Naive thymus-derived CD4-positive, alpha-beta T cell (primary cell): ENCODE measurements at regions of chr2 and their contacts with region 1.

Region 1: DNA sequence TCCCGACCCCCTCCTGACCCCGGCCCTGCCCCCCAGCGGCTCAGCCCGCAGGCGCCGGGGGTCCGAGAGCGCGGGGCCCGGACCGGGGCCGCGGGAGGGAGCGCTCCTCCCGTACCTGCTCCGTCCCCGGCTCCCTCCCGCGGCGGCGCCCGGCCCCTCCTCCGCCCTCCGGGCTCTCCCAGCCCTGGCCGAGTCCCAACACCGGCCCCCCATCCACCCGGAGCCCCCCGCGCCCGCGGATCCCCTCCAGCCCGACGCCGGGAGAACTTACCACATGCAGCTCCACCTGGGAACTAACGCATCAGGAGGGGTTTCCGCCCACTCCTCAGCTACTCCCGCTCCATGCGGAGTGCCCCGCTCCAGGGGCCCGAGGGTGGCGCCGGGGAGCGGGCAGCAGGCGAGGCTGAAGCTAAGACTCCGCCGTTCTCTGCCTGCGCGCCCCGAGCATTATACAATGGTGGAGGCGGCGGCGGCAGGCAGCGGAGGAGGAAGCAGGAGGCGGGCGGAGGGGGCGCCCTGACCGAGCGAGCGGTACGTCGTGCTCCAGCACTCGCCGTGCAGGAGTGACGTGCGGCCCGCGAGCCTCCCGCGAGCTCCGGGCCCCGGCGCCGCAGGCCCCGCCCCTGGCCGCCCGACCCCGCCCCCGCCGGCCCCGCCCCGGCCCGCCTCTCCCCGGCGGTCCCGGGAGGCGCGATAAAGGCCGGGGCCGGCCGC is at the start of gene SERTAD2:
- DNase-seq: peak; percentile 80 to 89 (median 86)
- ATAC-seq: peak; percentile 93
- H3K4me3 ChIP-seq: peak within 1 kb of the TSS; percentile 66
- H3K4me3 Mint-ChIP-seq: peak within 1 kb of the TSS; percentile 84 to 99 (median 96)
- H3K27ac ChIP-seq: peak within 1 kb of the TSS; percentile 90
- H3K27ac Mint-ChIP-seq: peak within 1 kb of the TSS; percentile 81 to 98 (median 94)
- H3K4me1 ChIP-seq: peaks cover 8 to 45% of the 10 kb centered on the region in 2 donors
- H3K4me1 Mint-ChIP-seq: peaks cover 44 to 84% (median 80%) of the 10 kb centered on the region in 7 donors
- H3K27me3 ChIP-seq: no peaks in the 10 kb centered on the region
- H3K27me3 Mint-ChIP-seq: no peaks in the 10 kb centered on the region
- total RNA-seq, gene SERTAD2: 34.3 to 43.8 (median 40.1) TPM

Region 2: GRCh38 chr2:64203858-64204632 is 449.5 kb before region 1 on chr2:
- CTCF ChIA-PET with region 1: no interaction called
- POLR2A ChIA-PET with region 1: no interaction called
- intact Hi-C with region 1: loop called in 1 of 2 experiments (anchors 5 kb)
- DNase-seq: peak in 5 of 9 donors; percentile 12 to 67 (median 28)
- ATAC-seq: peak; percentile 81
- H3K4me3 ChIP-seq: peak overlapping the region; percentile 52
- H3K4me3 Mint-ChIP-seq: peak overlapping the region; percentile 72 to 89 (median 80)
- H3K27ac ChIP-seq: peak overlapping the region; percentile 66
- H3K27ac Mint-ChIP-seq: peak overlapping the region; percentile 82 to 95 (median 94)
- H3K4me1 ChIP-seq: peaks cover 0 to 51% of the 10 kb centered on the region in 2 donors
- H3K4me1 Mint-ChIP-seq: peaks cover 26 to 91% (median 81%) of the 10 kb centered on the region in 7 donors
- H3K27me3 ChIP-seq: no peaks in the 10 kb centered on the region
- H3K27me3 Mint-ChIP-seq: no peaks in the 10 kb centered on the region

Region 3: DNA sequence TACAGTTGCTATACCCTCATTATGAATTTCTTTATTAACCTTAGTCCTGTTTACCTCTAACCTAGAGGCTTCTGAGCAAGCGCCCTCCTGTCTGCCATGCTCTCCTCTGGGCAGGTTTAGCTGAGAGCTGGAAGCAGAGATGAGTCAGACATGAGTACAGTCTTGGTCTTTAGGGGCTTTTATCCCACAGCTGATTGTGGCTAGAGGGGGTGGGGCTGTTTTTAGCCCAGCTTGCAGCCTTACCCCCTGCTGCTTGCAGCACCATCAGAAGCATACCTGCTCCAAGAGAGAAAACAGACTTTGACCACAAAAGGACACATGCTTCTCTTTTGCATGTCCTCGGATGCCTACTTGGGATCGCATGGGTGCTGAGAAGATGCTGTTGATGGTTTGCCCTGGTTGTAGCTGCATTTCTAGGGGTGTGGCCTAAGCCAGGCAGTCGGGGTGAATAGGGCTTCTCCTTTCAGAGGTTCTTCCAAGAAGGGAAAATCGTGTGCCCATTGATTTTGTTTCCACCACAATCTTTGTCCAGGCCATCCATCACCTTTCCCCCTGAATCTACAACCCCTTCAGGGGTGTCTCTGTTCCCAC is 314.5 kb before region 1 on chr2:
- CTCF ChIA-PET with region 1: no interaction called
- POLR2A ChIA-PET with region 1: no interaction called
- intact Hi-C with region 1: no loop called
- DNase-seq: no peak
- ATAC-seq: no peak
- H3K4me3 ChIP-seq: no peak overlapping the region
- H3K4me3 Mint-ChIP-seq: no peak overlapping the region
- H3K27ac ChIP-seq: no peak overlapping the region
- H3K27ac Mint-ChIP-seq: peak overlapping the region in 1 of 9 donors; percentile 37
- H3K4me1 ChIP-seq: no peaks in the 10 kb centered on the region
- H3K4me1 Mint-ChIP-seq: peaks cover 0 to 7% (median 0%) of the 10 kb centered on the region in 7 donors
- H3K27me3 ChIP-seq: no peaks in the 10 kb centered on the region
- H3K27me3 Mint-ChIP-seq: peaks cover 0 to 10% (median 0%) of the 10 kb centered on the region in 5 donors

Region 4: DNA sequence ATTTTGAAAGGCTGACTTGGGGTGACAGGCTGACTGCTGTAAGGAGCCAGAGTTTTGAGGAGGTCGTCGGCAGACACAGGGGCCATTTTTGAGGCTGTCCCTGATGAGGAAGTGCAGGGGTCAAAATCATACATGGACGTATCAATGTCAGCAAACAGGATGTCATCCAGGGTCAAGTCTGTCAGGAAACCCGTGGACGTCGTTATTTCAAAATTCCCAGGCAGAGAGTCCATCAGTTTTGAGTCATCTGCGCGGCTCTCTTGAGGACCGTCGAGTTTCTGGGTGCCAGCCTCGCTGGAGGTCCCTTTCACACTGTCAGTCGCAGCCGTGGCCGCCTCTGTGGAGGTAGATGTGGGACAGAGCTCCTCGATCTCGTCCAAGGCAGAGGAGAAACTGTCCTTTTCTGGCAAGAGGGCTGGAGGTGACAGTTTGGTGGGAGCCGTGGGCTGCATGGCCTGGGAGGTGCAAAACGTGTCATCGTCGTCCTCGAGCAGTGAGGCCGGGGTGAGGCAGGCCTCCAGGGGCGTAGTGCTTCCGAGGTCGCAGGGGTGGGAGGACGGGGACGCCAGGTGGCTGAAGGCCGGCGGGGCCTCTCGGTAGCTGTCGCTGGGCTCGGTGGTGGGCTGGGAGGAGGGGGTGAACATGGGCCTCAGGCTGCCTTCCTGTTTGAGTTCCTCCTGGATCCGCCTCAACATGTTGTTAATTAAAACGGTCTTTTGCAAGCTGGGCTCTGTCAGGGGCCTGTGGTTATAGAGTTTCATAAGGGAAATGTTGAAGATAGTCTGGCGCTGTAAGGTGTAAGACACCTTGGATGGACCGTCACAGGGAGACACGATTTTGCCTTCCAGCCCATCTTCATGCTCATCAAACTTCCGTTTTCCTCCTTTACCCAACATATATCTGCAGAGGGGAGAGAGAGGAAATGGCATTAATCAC is 17.3 kb before region 1 on chr2:
- CTCF ChIA-PET with region 1: interaction called, 8 read pairs
- POLR2A ChIA-PET with region 1: interaction called, 31 read pairs
- intact Hi-C with region 1: no loop called
- DNase-seq: no peak
- ATAC-seq: peak; percentile 43
- H3K4me3 ChIP-seq: no peak overlapping the region
- H3K4me3 Mint-ChIP-seq: peak overlapping the region; percentile 47 to 75 (median 66)
- H3K27ac ChIP-seq: peak overlapping the region; percentile 36
- H3K27ac Mint-ChIP-seq: peak overlapping the region; percentile 33 to 92 (median 88)
- H3K4me1 ChIP-seq: peaks cover 0 to 41% of the 10 kb centered on the region in 2 donors
- H3K4me1 Mint-ChIP-seq: peaks cover 47 to 69% (median 59%) of the 10 kb centered on the region in 7 donors
- H3K27me3 ChIP-seq: no peaks in the 10 kb centered on the region
- H3K27me3 Mint-ChIP-seq: no peaks in the 10 kb centered on the region

Region 5: DNA sequence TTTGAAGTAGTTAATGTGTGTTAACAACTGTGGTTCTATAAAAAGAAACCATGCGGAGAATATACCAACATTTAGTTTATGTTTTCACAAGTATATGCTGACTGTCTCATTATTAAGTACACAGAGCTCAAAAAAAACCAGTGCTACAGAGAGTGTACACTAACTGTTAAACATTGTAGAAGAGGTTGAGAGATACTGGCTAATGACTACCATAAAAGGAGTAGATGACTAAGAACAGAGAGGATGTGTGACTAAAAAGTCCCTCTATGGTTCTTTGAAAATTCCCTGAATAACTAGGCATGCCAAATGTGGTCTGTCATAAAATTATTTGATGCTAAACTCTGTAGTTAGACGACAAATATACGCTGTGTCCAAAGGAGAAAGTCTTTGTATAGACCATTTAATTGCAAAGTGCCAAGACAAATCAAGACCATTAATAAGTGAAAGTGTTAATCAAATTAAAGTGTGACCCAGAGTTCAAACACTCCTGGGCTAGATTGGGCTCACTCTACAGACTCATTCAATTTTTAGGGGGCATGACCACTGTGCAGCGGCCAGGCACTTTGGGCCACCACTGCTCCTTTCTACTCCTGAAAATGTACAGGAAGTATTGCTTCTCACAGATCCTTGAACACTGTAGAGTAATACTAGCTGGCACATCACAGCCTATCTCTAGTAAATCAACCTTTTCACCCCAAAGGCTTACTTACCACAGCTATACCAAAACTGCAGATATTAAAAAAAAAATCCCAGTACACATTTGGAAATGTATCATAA is 45.4 kb after region 1 on chr2:
- CTCF ChIA-PET with region 1: interaction called, 5 read pairs
- POLR2A ChIA-PET with region 1: interaction called, 20 read pairs
- intact Hi-C with region 1: loop called in 1 of 2 experiments (anchors 1 kb)
- DNase-seq: no peak
- ATAC-seq: peak; percentile 76
- H3K4me3 ChIP-seq: no peak overlapping the region
- H3K4me3 Mint-ChIP-seq: peak overlapping the region in 1 of 10 donors; percentile 80
- H3K27ac ChIP-seq: no peak overlapping the region
- H3K27ac Mint-ChIP-seq: peak overlapping the region in 4 of 9 donors; percentile 2 to 79 (median 36)
- H3K4me1 ChIP-seq: peaks cover 8 to 12% of the 10 kb centered on the region in 2 donors
- H3K4me1 Mint-ChIP-seq: peaks cover 21 to 59% (median 41%) of the 10 kb centered on the region in 7 donors
- H3K27me3 ChIP-seq: no peaks in the 10 kb centered on the region
- H3K27me3 Mint-ChIP-seq: no peaks in the 10 kb centered on the region

Region 6: DNA sequence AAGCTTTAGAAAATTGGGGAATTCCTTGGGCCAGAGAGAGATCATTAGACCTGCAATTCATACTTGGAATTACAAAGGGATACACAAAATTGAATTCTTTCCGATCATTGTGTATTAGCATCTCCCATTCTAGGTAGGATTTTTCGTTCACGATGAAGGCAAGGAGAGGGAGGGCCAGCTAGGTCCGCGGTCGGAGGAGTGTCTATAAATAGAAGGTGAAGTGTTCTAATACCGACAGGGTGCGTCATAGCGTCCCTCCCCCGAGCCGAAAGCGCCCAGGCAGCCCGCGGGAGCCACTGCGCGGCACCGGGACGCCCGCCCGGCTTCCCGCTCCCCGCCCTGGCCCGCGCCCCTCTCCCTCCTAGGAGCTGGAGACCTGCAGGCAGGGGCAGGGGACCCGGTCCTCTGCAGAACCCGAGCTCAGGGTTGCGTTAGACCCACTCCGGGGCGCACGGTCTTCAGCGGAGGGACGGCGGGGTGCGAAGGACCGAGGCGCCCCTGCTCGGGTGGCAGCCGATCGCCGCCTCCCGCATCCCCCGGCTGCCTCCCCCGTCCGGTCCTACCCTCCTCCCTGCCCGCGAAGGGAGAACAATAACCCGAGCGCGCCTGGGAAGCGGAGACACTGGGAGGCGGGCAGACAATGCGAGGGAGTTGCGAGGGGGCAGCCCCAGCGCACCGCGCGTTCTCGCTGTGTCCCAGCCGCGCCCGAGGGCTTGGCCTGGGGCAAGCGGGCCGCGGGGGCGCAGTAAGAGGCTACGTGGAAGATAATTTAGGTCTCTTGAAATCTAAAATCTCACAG is 114.4 kb after region 1 on chr2:
- CTCF ChIA-PET with region 1: interaction called, 5 read pairs
- POLR2A ChIA-PET with region 1: interaction called, 28 read pairs
- intact Hi-C with region 1: loop called (anchors 1 to 2 kb)
- DNase-seq: peak; percentile 35 to 78 (median 55)
- ATAC-seq: peak; percentile 89
- H3K4me3 ChIP-seq: peak overlapping the region; percentile 80
- H3K4me3 Mint-ChIP-seq: peak overlapping the region; percentile 90 to 99 (median 96)
- H3K27ac ChIP-seq: peak overlapping the region; percentile 73
- H3K27ac Mint-ChIP-seq: peak overlapping the region; percentile 92 to 97 (median 95)
- H3K4me1 ChIP-seq: peaks cover 3 to 12% of the 10 kb centered on the region in 2 donors
- H3K4me1 Mint-ChIP-seq: peaks cover 9 to 40% (median 23%) of the 10 kb centered on the region in 7 donors
- H3K27me3 ChIP-seq: no peaks in the 10 kb centered on the region
- H3K27me3 Mint-ChIP-seq: peaks cover 0 to 15% (median 0%) of the 10 kb centered on the region in 5 donors

Region 7: DNA sequence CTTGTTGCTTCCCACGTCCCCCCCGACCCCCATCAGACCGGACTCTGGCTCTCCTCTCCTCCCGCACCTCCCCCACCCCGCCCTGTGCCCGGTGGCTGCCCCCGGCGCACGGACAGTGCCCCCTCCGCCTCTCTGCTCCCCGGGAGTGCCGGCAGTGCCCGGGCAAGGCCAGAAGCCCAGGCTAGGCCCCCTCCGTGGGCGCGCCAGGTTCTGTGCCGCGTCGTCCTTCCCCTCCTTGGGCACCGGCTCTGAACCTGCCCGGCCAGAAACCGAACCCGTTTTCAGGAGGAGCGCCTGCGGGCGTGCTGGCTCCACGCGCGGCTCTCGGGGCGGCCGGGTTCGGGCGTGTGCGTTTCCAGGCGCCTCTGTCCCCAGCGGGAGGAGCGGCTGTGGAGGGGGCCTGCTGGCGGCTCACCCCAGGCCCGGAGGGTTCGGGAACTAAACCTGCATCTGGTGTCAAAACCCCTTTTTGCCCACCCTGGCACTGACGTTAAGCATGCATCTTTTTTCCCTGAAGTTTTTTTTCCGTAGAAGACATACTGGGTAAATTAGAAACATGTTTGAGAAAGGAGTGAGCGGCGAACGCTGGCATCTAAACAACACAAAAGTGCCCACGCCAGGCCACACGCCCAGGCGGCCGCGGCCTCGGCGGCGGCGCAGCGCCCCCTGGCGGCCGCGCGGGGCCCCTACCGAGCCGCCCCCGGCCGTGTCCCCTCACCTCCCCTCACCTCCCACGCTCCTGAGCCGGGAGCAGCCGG is 211.7 kb after region 1 on chr2:
- CTCF ChIA-PET with region 1: interaction called, 4 read pairs
- POLR2A ChIA-PET with region 1: interaction called, 3 read pairs
- intact Hi-C with region 1: loop called in 1 of 2 experiments (anchors 2 kb)
- DNase-seq: peak; percentile 30 to 82 (median 72)
- ATAC-seq: peak; percentile 87
- H3K4me3 ChIP-seq: peak overlapping the region; percentile 88
- H3K4me3 Mint-ChIP-seq: peak overlapping the region in 7 of 10 donors; percentile 72 to 86 (median 81)
- H3K27ac ChIP-seq: peak overlapping the region; percentile 40
- H3K27ac Mint-ChIP-seq: no peak overlapping the region
- H3K4me1 ChIP-seq: peaks cover 0 to 5% of the 10 kb centered on the region in 2 donors
- H3K4me1 Mint-ChIP-seq: peaks cover 0 to 5% (median 0%) of the 10 kb centered on the region in 7 donors
- H3K27me3 ChIP-seq: peaks cover 0 to 3% of the 10 kb centered on the region in 2 donors
- H3K27me3 Mint-ChIP-seq: peaks cover 0 to 17% (median 8%) of the 10 kb centered on the region in 5 donors

Region 8: GRCh38 chr2:66555501-66556324 is 1902.2 kb after region 1 on chr2:
- CTCF ChIA-PET with region 1: no interaction called
- POLR2A ChIA-PET with region 1: no interaction called
- intact Hi-C with region 1: no loop called
- DNase-seq: no peak
- ATAC-seq: no peak
- H3K4me3 ChIP-seq: no peak overlapping the region
- H3K4me3 Mint-ChIP-seq: peak overlapping the region in 5 of 10 donors; percentile 21 to 54 (median 33)
- H3K27ac ChIP-seq: no peak overlapping the region
- H3K27ac Mint-ChIP-seq: no peak overlapping the region
- H3K4me1 ChIP-seq: no peaks in the 10 kb centered on the region
- H3K4me1 Mint-ChIP-seq: peaks cover 0 to 11% (median 0%) of the 10 kb centered on the region in 7 donors
- H3K27me3 ChIP-seq: no peaks in the 10 kb centered on the region
- H3K27me3 Mint-ChIP-seq: peaks cover 4 to 26% (median 17%) of the 10 kb centered on the region in 5 donors